ENCODE measurements at regions of chr14 and their contacts with region 1.

Region 1: DNA sequence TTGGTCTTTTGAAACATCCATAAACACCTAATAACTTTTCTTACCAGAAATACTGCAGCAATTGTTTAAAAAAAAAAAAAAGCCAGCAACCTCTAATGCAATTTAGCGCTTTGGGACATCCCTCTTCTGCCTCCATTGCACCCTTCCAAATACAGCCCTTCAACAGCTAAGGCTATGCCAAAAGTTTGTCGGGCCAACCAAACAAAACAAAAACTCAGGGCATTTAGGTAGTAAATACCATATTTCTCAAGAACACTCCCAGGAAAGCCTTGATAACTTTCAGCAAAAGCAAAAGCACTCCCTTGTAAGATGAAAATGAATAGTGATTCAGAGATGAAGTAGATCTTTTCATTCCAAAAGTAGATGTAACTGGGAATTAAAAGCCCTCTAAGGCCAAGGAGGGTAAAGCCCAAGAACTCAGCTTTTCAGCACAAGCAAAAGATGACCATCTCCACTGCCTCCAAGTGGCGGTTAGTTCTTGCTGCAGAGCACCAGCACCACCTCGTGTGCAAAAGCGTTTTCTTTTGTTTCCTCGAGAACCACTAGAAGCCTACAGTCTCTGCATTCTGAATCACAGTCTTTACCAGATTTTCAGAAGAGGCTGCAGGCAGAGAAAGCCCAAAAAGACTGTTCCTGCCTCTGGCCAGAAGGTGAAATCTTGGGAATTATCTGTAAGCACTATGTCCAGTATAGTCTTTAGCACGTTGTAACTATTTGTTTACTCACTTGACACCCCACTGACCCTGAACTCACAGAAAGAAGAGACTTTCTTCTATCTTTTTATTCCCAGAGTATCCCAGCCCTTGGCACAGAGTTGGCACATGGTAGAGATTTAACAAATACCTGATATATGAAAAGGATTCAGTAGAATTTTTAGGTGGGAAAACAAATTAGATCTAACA is 53.1 kb downstream of the SIX6 start:
- DNase-seq: peak; percentile 94
- ATAC-seq: peak; percentile 97
- H3K4me3 ChIP-seq: no peak overlapping the region
- H3K27ac ChIP-seq: no peak overlapping the region
- H3K4me1 ChIP-seq: peaks cover 4% of the 10 kb centered on the region; the same call in 1 of the 2 replicates
- H3K27me3 ChIP-seq: no peaks in the 10 kb centered on the region
- CTCF ChIP-seq: peak; percentile 98

Region 2: DNA sequence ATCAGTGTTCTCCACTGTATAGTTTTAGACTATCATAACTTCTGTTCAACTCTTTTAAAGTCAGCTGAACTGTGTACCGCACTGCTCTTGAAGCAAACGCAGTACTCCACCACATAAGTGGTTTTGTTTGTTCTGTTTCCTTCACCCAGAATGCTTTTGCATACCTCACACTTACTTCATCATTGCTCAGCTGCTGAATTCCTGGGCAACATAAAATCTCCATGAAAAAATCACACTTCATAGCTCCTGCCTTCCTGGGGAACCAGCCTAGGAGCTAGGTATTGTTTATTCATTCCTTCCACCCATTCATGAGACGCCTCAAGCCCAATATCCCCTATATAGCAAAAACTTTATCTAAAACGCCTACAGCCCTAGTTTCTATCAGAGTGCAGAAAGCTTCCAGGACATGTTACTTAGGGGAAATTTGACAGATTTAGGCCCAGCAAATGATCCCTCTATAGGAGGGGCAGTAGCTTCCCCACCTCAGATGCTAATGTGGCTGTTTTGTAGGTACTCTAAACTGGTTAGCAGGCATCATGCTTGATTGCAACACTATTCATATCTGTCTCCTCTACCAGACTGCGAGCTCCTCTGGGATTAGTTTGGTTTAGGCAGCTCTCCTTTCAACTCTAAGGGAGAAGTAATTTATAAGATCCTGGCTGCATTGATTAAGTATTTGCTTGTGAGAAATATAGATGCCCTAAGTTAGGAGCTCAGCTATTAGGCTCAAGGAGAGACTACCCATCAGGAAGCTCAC is 597.7 kb before region 1 on chr14:
- CTCF ChIA-PET with region 1: no interaction called
- POLR2A ChIA-PET with region 1: no interaction called
- intact Hi-C with region 1: loop called (anchors 10 kb)
- DNase-seq: peak; percentile 70
- ATAC-seq: peak; percentile 66
- H3K4me3 ChIP-seq: no peak overlapping the region
- H3K27ac ChIP-seq: no peak overlapping the region
- H3K4me1 ChIP-seq: peaks cover 18% of the 10 kb centered on the region
- H3K27me3 ChIP-seq: peaks cover 23% of the 10 kb centered on the region
- CTCF ChIP-seq: no peak

Region 3: DNA sequence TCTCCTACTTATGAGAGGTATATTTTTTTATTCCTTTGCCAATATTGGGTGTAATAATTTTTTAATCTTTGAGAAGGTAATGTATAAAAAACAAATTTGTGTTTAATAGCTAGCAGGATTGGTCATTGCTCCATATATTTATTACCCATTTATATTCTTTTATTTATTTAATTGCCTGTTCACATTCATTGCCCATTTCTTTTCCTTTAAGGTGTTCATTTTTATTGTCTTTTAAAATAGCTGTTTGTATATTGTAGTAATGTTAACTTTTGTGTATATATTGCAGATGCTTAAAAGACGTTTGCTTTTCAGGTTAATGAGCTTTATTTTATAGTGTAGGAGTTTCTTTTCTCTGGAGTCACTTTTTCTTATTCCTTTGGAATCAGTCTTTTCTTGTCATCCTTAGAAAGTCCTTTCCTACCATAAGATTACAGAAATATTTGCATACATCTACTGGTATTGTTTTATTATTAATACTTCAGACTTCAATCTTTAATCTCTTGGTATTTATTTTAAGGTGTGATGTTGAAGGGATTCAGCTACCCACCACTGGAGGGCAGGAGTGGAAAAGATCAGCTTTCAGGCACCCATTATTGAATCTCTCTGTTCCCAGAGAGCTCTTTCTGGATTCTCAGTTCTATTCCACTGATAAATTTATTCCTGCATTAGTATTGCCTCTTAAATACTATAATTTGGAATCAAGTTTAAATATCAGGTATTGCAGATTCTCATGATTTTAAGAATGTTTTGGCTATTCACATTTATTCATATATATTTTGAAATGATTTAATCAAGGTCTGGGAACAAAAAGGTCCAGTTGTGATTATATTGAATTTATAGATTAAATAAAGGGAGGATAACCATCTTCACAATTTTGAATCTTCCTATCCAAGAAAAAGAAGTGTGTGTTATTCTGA is 295.8 kb before region 1 on chr14:
- CTCF ChIA-PET with region 1: interaction called, 3 read pairs
- POLR2A ChIA-PET with region 1: no interaction called
- intact Hi-C with region 1: loop called (anchors 1 kb)
- DNase-seq: peak; percentile 82
- ATAC-seq: peak; percentile 94
- H3K4me3 ChIP-seq: no peak overlapping the region
- H3K27ac ChIP-seq: no peak overlapping the region
- H3K4me1 ChIP-seq: peaks cover 5% of the 10 kb centered on the region; the same call in 1 of the 2 replicates
- H3K27me3 ChIP-seq: no peaks in the 10 kb centered on the region
- CTCF ChIP-seq: peak; percentile 100

Region 4: DNA sequence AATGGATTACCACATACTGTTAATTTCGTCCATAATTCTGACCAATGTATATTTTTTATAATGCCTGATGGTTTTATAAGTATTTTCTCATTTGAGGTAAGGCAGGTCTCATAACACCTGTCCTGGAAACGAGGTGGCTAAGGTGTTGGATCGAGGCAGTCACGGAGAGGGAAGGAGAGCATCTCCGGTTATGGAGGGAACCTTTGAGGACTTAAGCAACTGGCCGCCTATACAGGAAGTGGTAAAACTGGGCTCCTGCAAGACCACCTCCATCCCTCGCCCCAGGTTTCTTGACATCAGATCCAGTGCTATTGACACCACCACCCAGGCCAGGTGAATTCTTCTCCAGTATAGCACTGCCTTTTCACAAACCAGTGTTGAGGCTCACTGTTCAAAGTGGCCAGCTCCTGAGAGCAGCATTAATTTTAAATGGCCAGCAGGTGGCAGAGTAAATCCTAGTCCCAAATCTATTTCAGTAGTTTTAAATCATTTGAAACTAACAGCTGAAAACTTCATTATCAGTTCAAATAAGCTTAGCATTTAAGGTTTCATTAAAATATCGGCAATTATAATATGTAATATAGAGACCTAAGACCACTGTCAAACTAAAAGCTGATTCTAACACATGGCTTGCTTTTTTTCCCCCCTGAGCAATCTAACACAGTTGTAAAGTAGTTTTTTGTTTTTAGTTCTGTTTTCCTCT is 212.3 kb before region 1 on chr14:
- CTCF ChIA-PET with region 1: interaction called, 15 read pairs
- POLR2A ChIA-PET with region 1: no interaction called
- intact Hi-C with region 1: loop called (anchors 1 kb)
- DNase-seq: peak; percentile 90
- ATAC-seq: peak; percentile 82
- H3K4me3 ChIP-seq: no peak overlapping the region
- H3K27ac ChIP-seq: no peak overlapping the region
- H3K4me1 ChIP-seq: no peaks in the 10 kb centered on the region
- H3K27me3 ChIP-seq: peaks cover 15% of the 10 kb centered on the region
- CTCF ChIP-seq: peak; percentile 99

Region 5: GRCh38 chr14:60485598-60486251 is 76.4 kb before region 1 on chr14 and contains the start of gene C14orf39:
- CTCF ChIA-PET with region 1: interaction called, 5 read pairs
- POLR2A ChIA-PET with region 1: no interaction called
- intact Hi-C with region 1: loop called (anchors 1 kb)
- DNase-seq: peak; percentile 65
- ATAC-seq: peak; percentile 75
- H3K4me3 ChIP-seq: peak within 1 kb of the TSS; percentile 57
- H3K27ac ChIP-seq: no peak within 1 kb of the TSS
- H3K4me1 ChIP-seq: peaks cover 12% of the 10 kb centered on the region; the same call in 1 of the 2 replicates
- H3K27me3 ChIP-seq: peaks cover 19% of the 10 kb centered on the region; the same call in 1 of the 2 replicates
- CTCF ChIP-seq: no peak
- total RNA-seq, gene C14orf39: 0.17 and 0.47 TPM in 2 replicates